Heart right ventricle (tissue), 16 donors: ENCODE measurements at regions of chr2 and their contacts with region 1.

Region 1: DNA sequence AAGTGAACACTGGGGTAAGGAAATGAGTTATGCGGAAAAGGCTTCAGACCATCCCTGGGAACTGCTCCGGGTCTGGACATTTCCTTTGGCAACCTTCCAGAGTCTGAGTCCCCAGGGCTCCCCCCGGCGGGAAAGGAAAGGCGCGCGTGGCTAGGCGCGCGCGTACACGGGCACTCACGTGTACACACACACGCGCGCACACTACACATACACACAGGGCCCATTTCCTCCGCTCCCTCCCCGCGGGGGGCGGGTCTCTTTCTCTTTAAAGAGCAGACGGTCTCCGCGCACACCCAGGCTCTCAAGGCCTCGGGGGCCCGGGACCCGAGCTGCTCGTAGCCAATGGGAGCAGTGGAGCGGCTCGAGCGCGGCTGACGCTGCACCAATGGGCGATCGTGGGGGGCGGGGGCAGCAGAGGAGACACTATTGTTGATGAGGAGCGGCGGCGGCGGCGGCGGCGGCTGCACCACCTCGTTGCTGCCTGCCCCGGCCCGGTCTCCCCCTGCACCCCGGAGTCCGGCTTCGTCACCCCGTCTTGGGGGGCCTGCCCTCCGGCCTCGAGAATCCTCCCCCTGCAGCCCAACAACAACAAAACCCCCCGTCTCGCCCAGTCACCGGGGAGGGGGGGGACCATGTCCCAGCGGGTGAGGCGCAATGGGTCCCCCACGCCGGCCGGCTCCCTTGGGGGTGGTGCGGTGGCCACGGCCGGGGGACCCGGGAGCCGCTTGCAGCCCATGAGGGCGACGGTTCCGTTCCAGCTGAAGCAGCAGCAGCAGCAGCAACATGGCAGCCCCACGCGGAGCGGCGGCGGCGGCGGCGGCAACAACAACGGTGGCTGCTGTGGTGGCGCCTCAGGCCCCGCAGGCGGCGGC is at the start of gene FAM117B:
- DNase-seq: peak; percentile 98
- ATAC-seq: peak; percentile 97 to 99 (median 98)
- H3K4me3 ChIP-seq: peak within 1 kb of the TSS; percentile 85 to 99 (median 96)
- H3K27ac ChIP-seq: peak within 1 kb of the TSS; percentile 81 to 95 (median 90)
- H3K4me1 ChIP-seq: peaks cover 3 to 30% (median 24%) of the 10 kb centered on the region in 9 donors
- H3K27me3 ChIP-seq: no peaks in the 10 kb centered on the region
- CTCF ChIP-seq: peak in 1 of 9 donors; percentile 5
- total RNA-seq, gene FAM117B: 0.75 to 3.9 (median 2.6) TPM

Region 2: GRCh38 chr2:202801544-202801943 is 166.8 kb after region 1 on chr2:
- intact Hi-C with region 1: loop called in 1 of 10 experiments (anchors 10 kb)
- DNase-seq: no peak
- ATAC-seq: no peak
- H3K4me3 ChIP-seq: no peak overlapping the region
- H3K27ac ChIP-seq: no peak overlapping the region
- H3K4me1 ChIP-seq: peaks cover 0 to 12% (median 0%) of the 10 kb centered on the region in 9 donors
- H3K27me3 ChIP-seq: no peaks in the 10 kb centered on the region
- CTCF ChIP-seq: no peak

Region 3: GRCh38 chr2:202848813-202849212 is 214.0 kb after region 1 on chr2:
- intact Hi-C with region 1: no loop called
- DNase-seq: no peak
- ATAC-seq: no peak
- H3K4me3 ChIP-seq: no peak overlapping the region
- H3K27ac ChIP-seq: no peak overlapping the region
- H3K4me1 ChIP-seq: peaks cover 0 to 8% (median 0%) of the 10 kb centered on the region in 9 donors
- H3K27me3 ChIP-seq: no peaks in the 10 kb centered on the region
- CTCF ChIP-seq: no peak

Region 4: DNA sequence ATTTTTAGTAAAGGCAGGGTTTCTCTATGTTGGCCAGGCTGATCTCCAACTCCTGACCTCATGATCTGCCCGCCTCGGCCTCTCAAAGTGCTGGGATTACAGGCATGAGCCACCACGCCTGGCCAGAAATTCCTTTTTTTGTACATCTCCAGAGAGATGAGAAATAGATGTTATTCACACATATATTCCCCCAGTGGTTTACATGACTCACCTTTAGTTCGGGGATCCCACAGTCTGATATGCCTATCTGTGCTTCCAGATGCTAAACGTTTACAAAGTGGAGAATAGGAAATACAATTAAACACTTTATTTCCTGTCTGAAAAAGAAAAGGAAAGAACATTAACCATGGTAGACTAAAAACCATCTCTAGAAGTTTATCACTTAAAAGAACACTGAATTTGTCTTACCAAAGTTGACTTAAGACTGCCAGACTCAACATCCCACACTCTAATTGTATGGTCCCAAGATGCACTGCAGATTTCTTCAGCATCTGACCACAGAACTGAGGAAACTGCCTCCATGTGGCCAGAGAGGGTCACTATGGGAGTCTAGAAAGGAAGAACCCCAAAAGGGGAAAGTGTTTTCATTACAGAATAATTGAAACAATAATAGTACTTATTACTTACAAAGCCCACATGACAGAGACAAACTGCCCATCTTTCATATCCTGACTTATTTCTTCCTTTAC is 249.3 kb after region 1 on chr2:
- intact Hi-C with region 1: no loop called
- DNase-seq: no peak
- ATAC-seq: no peak
- H3K4me3 ChIP-seq: no peak overlapping the region
- H3K27ac ChIP-seq: no peak overlapping the region
- H3K4me1 ChIP-seq: peaks cover 0 to 11% (median 0%) of the 10 kb centered on the region in 9 donors
- H3K27me3 ChIP-seq: no peaks in the 10 kb centered on the region
- CTCF ChIP-seq: no peak